Caco-2 (cell line): ENCODE measurements at regions of chr17 and their contacts with region 1.

Region 1: DNA sequence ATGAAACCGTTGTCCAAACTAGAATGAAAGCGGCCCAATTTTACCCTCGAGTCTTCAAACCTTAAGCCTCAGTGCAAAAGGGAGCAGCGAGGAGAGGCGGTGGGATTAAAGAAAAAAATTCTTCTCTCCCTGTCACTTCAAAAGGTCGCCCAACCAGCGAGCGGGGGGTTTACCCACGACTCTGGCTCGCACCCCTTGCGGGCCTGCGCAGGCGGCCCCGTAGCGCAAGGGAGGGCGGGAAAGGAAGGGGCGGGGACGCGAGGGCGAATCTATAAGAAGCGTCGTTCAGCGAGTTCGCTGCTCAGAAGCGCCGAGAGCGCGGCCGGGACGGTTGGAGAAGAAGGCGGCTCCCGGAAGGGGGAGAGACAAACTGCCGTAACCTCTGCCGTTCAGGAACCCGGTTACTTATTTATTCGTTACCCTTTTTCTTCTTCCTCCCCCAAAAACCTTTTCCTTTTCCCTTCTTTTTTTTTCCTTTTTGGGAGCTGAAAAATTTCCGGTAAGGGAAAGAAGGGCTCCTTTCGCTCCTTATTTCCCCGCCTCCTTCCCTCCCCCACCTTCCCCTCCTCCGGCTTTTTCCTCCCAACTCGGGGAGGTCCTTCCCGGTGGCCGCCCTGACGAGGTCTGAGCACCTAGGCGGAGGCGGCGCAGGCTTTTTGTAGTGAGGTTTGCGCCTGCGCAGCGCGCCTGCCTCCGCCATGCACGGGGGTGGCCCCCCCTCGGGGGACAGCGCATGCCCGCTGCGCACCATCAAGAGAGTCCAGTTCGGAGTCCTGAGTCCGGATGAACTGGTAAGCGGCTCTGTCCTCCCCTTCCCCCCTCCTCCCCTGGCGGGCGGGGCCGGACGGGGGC is at the start of gene POLR2A:
- DNase-seq: peak; percentile 93
- H3K4me3 ChIP-seq: peak within 1 kb of the TSS; percentile 71
- H3K4me3 Mint-ChIP-seq: peak within 1 kb of the TSS; percentile 97
- H3K27ac Mint-ChIP-seq: peak within 1 kb of the TSS; percentile 98
- H3K4me1 ChIP-seq: peaks cover 14% of the 10 kb centered on the region
- H3K4me1 Mint-ChIP-seq: peaks cover 37% of the 10 kb centered on the region
- H3K27me3 ChIP-seq: no peaks in the 10 kb centered on the region
- H3K27me3 Mint-ChIP-seq: no peaks in the 10 kb centered on the region
- CTCF ChIP-seq: no peak
- total RNA-seq, gene POLR2A: 69.8 and 72.1 TPM in 2 replicates

Region 2: GRCh38 chr17:7306911-7307686 is 177.2 kb before region 1 on chr17 and contains the start of gene EIF5A:
- CTCF ChIA-PET with region 1: no interaction called
- POLR2A ChIA-PET with region 1: no interaction called
- intact Hi-C with region 1: loop called (anchors 5 kb)
- DNase-seq: peak; percentile 94 to 98
- H3K4me3 ChIP-seq: peak within 1 kb of the TSS; percentile 71
- H3K4me3 Mint-ChIP-seq: peak within 1 kb of the TSS; percentile 93
- H3K27ac Mint-ChIP-seq: peak within 1 kb of the TSS; percentile 93
- H3K4me1 ChIP-seq: no peaks in the 10 kb centered on the region; the same call in 1 of the 2 replicates
- H3K4me1 Mint-ChIP-seq: peaks cover 10% of the 10 kb centered on the region
- H3K27me3 ChIP-seq: no peaks in the 10 kb centered on the region
- H3K27me3 Mint-ChIP-seq: no peaks in the 10 kb centered on the region
- CTCF ChIP-seq: no peak
- total RNA-seq, gene EIF5A: 345 and 388 TPM in 2 replicates

Region 3: DNA sequence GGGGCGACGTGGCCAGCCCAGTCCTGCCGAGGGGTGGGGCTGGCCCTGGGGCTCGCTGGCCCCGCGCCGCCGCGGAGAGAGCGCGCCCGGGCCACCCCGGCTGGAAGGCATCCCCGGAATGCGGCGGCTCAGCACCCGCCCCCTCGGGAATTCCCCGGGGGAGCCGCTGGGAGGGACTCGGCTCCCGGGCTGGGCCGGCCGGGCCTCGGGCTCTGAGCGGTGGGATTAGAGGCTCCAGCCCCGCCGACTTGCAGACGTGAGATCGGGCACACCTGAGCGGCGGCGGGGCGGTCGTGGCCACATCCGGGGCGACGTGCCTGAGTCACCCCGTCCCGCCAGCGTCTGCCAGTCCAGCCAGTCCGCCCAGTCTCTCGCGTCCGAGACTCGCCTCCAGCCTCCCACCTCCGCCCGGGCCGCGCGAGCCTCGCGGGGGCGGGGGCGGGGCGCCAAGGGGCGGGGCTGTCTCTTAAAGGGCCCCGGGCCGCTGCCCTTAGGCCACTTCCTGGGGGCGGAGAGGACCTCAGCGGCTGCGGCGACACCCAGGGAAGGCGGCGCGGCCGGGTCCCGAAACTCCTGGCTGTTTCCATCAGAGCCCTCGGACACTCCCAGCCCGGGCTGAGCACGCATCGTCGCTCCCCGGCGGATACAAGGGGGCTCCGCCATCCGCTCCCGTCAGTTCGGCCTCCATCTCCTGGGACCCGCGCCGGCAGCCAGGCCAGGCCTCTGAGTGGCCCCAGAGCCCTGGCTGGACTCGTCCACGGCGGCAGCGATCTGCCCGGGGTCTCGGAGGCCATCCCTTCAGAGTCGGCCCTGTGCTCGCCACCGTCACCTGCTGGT is 132.4 kb before region 1 on chr17 and contains the start of gene KCTD11:
- CTCF ChIA-PET with region 1: no interaction called
- POLR2A ChIA-PET with region 1: no interaction called
- intact Hi-C with region 1: loop called (anchors 5 kb)
- DNase-seq: peak; percentile 88 to 90
- H3K4me3 ChIP-seq: peak within 1 kb of the TSS; percentile 63
- H3K4me3 Mint-ChIP-seq: peak within 1 kb of the TSS; percentile 83
- H3K27ac Mint-ChIP-seq: peak within 1 kb of the TSS; percentile 88
- H3K4me1 ChIP-seq: peaks cover 3% of the 10 kb centered on the region; the same call in 1 of the 2 replicates
- H3K4me1 Mint-ChIP-seq: peaks cover 11% of the 10 kb centered on the region
- H3K27me3 ChIP-seq: no peaks in the 10 kb centered on the region
- H3K27me3 Mint-ChIP-seq: no peaks in the 10 kb centered on the region
- CTCF ChIP-seq: peak in 1 of 2 experiments; percentile 37
- total RNA-seq, gene KCTD11: 5.1 and 5.4 TPM in 2 replicates

Region 4: DNA sequence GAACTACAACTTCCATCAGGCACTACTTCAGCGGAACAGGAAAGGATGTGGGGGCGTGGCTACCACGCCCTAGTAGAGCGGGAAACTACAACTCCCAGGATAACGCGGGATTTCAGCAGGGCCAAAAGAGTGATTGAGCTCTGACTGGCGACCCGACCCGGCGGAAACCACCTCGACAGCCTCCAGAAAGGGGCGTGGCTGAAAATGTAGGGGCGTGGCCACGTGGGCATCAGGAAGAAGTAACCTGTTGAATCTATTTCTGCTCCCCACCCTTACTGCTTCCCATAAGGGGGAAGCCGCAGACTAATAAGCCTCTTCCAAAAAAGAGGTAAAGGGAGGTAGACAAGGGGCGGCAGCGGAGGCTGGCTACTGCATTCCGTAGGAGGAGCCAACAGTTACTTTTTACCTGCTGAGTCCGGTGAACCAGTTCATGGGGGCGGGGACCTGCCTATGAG is 49.0 kb before region 1 on chr17 and contains the start of gene TMEM102:
- CTCF ChIA-PET with region 1: interaction called, 4 read pairs
- POLR2A ChIA-PET with region 1: interaction called, 7 read pairs
- intact Hi-C with region 1: loop called (anchors 1 kb)
- DNase-seq: peak; percentile 92 to 94
- H3K4me3 ChIP-seq: peak within 1 kb of the TSS; percentile 55
- H3K4me3 Mint-ChIP-seq: peak within 1 kb of the TSS; percentile 81
- H3K27ac Mint-ChIP-seq: peak within 1 kb of the TSS; percentile 95
- H3K4me1 ChIP-seq: no peaks in the 10 kb centered on the region
- H3K4me1 Mint-ChIP-seq: peaks cover 6% of the 10 kb centered on the region
- H3K27me3 ChIP-seq: no peaks in the 10 kb centered on the region
- H3K27me3 Mint-ChIP-seq: no peaks in the 10 kb centered on the region
- CTCF ChIP-seq: no peak
- total RNA-seq, gene TMEM102: 2.9 and 3.7 TPM in 2 replicates

Region 5: DNA sequence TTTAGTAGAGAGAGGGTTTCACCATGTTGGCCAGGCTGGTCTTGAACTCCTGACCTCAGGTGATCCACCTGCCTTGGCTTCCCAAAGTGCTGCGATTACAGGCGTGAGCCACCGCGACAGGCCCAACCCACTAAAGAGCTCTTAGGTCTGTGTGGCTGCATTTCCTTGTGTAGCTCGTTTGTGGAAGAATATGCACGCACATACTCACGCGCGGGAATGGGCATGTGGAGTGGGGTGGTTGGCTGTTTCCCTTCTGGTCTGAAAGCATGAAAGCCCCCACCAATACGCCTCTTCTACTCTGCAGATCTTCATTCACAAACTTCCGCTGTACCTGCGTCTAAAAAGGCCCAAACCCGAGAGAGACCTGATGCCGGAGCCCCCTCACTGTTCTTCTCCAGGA is 29.3 kb before region 1 on chr17:
- CTCF ChIA-PET with region 1: no interaction called
- POLR2A ChIA-PET with region 1: interaction called, 3 read pairs
- intact Hi-C with region 1: loop called (anchors 2 kb)
- DNase-seq: no peak
- H3K4me3 ChIP-seq: no peak overlapping the region
- H3K4me3 Mint-ChIP-seq: peak overlapping the region; percentile 98
- H3K27ac Mint-ChIP-seq: peak overlapping the region; percentile 92
- H3K4me1 ChIP-seq: no peaks in the 10 kb centered on the region
- H3K4me1 Mint-ChIP-seq: no peaks in the 10 kb centered on the region
- H3K27me3 ChIP-seq: no peaks in the 10 kb centered on the region
- H3K27me3 Mint-ChIP-seq: no peaks in the 10 kb centered on the region
- CTCF ChIP-seq: no peak

Region 6: GRCh38 chr17:7572588-7573323 is 88.5 kb after region 1 on chr17:
- CTCF ChIA-PET with region 1: no interaction called
- POLR2A ChIA-PET with region 1: interaction called, 3 read pairs
- intact Hi-C with region 1: loop called (anchors 5 kb)
- DNase-seq: peak; percentile 96
- H3K4me3 ChIP-seq: peak overlapping the region; percentile 98
- H3K4me3 Mint-ChIP-seq: peak overlapping the region; percentile 92
- H3K27ac Mint-ChIP-seq: peak overlapping the region; percentile 99
- H3K4me1 ChIP-seq: peaks cover 12% of the 10 kb centered on the region
- H3K4me1 Mint-ChIP-seq: peaks cover 1% of the 10 kb centered on the region
- H3K27me3 ChIP-seq: no peaks in the 10 kb centered on the region
- H3K27me3 Mint-ChIP-seq: no peaks in the 10 kb centered on the region
- CTCF ChIP-seq: no peak